Uterus (tissue), 4 donors: ENCODE measurements at regions of chr1 and their contacts with region 1.

Region 1: DNA sequence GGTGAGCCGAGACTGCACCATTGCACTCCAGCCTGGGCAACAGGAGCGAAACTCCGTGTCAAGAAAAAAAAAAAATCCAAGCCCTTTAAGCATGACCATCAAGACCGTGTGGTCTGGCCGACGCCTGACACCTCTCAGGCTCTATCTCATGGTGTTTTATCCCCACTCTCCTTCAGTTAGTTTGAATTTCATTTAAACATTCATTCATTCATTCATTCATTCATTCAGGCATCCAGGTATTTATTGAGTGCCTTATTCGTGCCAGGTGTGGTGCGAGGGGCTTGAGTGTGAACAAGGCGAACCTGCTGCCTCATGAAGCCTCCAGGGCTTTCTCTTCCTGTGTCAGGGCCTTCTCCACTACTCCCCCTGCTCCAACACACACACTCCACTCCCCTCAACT is 22.6 kb upstream of the OPRD1 start:
- DNase-seq: no peak
- H3K4me3 ChIP-seq: no peak overlapping the region
- H3K27ac ChIP-seq: no peak overlapping the region
- H3K4me1 ChIP-seq: no peaks in the 10 kb centered on the region
- H3K27me3 ChIP-seq: no peaks in the 10 kb centered on the region
- CTCF ChIP-seq: no peak
- POLR2A ChIP-seq: no peak

Region 2: GRCh38 chr1:28505406-28506187 is 283.8 kb before region 1 on chr1 and contains the start of gene RCC1:
- intact Hi-C with region 1: no loop called
- DNase-seq: peak; percentile 96 to 98
- H3K4me3 ChIP-seq: peak within 1 kb of the TSS; percentile 50 to 65
- H3K27ac ChIP-seq: peak within 1 kb of the TSS; percentile 68 to 75
- H3K4me1 ChIP-seq: peaks cover 0 to 10% of the 10 kb centered on the region in 2 donors
- H3K27me3 ChIP-seq: no peaks in the 10 kb centered on the region
- CTCF ChIP-seq: peak in 1 of 4 experiments; percentile 11
- POLR2A ChIP-seq: peak; percentile 88 to 97
- total RNA-seq, gene RCC1: 3.8 to 37.6 (median 13.8) TPM

Region 3: DNA sequence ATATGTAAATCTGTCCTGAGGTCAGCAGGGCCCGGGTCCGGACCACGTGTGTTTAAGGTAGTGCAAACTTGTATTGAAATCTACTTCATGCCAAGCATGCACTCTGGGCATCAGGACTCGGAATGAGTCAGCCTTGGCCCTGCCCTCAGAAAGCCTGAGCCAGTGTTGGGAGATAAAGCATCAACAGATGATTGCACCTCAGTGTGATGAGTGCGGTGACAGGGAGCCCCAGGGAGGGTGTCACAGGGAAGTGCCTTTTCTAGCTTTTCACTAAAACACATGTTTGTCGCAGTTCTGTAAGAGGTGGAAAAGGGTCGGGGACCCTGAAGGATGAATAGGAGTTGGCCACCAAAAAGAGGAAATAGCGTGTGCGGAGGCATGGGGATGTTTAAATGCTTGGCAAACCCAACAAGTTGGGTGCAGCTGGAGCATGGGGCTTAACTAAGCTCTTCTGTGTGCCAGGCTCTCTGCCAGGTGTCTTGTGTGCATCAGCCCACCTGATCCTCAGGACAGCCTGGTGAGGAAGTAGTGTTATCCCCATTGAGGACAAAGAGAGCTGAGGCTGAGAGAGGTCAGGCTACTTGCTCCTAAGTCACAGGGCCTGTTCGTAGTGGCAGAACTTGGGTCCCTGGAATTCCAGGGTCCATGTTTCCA is 76.7 kb after region 1 on chr1:
- intact Hi-C with region 1: loop called (anchors 5 kb)
- DNase-seq: no peak
- H3K4me3 ChIP-seq: no peak overlapping the region
- H3K27ac ChIP-seq: no peak overlapping the region
- H3K4me1 ChIP-seq: no peaks in the 10 kb centered on the region
- H3K27me3 ChIP-seq: no peaks in the 10 kb centered on the region
- CTCF ChIP-seq: no peak
- POLR2A ChIP-seq: no peak